ENCODE measurements at regions of chr3 and their contacts with region 1.

Region 1: GRCh38 chr3:124467980-124468902 is 262.0 kb upstream of the UMPS start:
- DNase-seq: peak; percentile 62
- H3K4me3 Mint-ChIP-seq: no peak overlapping the region
- H3K27ac Mint-ChIP-seq: no peak overlapping the region
- H3K4me1 Mint-ChIP-seq: no peaks in the 10 kb centered on the region
- H3K27me3 Mint-ChIP-seq: peaks cover 90% of the 10 kb centered on the region
- CTCF ChIP-seq: peak; percentile 99

Region 2: GRCh38 chr3:124014366-124014942 is 453.8 kb before region 1 on chr3:
- CTCF ChIA-PET with region 1: no interaction called
- POLR2A ChIA-PET with region 1: no interaction called
- intact Hi-C with region 1: loop called (anchors 1 kb)
- DNase-seq: no peak
- H3K4me3 Mint-ChIP-seq: no peak overlapping the region
- H3K27ac Mint-ChIP-seq: no peak overlapping the region
- H3K4me1 Mint-ChIP-seq: no peaks in the 10 kb centered on the region
- H3K27me3 Mint-ChIP-seq: peaks cover 89% of the 10 kb centered on the region
- CTCF ChIP-seq: no peak

Region 3: DNA sequence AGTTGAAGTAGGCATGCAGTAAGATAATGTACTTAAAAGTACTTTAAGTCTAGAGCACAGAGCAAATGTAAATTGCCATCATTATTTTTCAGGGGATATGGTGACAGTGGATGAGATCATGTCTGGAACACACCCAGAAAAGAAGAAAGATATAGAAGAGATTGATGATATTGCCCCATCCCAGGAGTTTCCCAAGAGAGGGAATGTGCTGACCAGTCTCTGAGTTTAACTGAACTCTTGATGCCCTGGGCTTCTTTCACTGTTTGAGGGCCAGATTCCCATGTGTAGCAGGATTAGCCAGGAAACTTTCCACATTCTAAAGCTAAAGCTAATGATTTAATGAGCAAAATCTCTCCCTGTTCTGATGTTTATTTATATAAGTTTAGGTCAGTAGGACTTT is 104.8 kb before region 1 on chr3:
- CTCF ChIA-PET with region 1: interaction called, 14 read pairs
- POLR2A ChIA-PET with region 1: no interaction called
- intact Hi-C with region 1: no loop called
- DNase-seq: peak; percentile 27
- H3K4me3 Mint-ChIP-seq: no peak overlapping the region
- H3K27ac Mint-ChIP-seq: no peak overlapping the region
- H3K4me1 Mint-ChIP-seq: no peaks in the 10 kb centered on the region
- H3K27me3 Mint-ChIP-seq: peaks cover 58% of the 10 kb centered on the region
- CTCF ChIP-seq: no peak

Region 4: GRCh38 chr3:124413989-124414598 is 54.1 kb before region 1 on chr3:
- CTCF ChIA-PET with region 1: no interaction called
- POLR2A ChIA-PET with region 1: no interaction called
- intact Hi-C with region 1: no loop called
- DNase-seq: peak; percentile 22
- H3K4me3 Mint-ChIP-seq: no peak overlapping the region
- H3K27ac Mint-ChIP-seq: no peak overlapping the region
- H3K4me1 Mint-ChIP-seq: peaks cover 17% of the 10 kb centered on the region
- H3K27me3 Mint-ChIP-seq: peaks cover 24% of the 10 kb centered on the region
- CTCF ChIP-seq: no peak

Region 5: DNA sequence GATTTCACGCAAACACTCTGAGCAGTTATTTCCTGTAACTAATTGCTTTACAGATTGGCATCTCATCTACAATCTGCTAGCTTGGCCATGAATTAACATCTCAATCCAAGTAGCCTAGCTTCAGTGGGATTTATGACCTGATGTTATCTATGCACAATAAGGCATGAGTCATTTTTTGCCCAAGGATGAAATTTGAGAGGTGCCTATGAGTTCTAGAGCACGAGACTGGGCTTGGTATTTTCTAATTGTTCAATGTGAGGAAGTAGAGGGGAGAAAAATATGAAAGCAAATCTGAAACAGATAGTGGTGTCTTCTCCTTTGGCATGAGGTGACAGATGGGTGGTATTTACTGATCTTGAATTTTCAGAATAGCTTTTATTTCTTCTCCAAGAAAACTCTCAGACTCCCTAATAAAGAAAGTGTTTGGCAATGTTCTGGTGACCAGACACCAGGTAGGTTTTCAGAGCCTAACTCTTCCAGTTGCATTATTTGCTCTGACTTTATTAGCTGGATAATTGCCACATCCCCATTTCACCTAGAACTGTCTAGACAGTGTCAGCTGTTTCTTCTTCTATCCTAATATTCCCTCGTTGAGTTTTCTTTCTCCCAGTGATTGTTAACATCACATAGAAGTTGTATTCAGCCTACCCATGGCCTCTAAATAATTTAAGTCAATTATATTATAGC is 39.0 kb before region 1 on chr3:
- CTCF ChIA-PET with region 1: interaction called, 21 read pairs
- POLR2A ChIA-PET with region 1: no interaction called
- intact Hi-C with region 1: no loop called
- DNase-seq: peak; percentile 81
- H3K4me3 Mint-ChIP-seq: peak overlapping the region; percentile 15
- H3K27ac Mint-ChIP-seq: peak overlapping the region; percentile 66
- H3K4me1 Mint-ChIP-seq: peaks cover 25% of the 10 kb centered on the region
- H3K27me3 Mint-ChIP-seq: no peaks in the 10 kb centered on the region
- CTCF ChIP-seq: no peak

Region 6: GRCh38 chr3:124451630-124452317 is 16.5 kb before region 1 on chr3:
- CTCF ChIA-PET with region 1: interaction called, 23 read pairs
- POLR2A ChIA-PET with region 1: no interaction called
- intact Hi-C with region 1: no loop called
- DNase-seq: no peak
- H3K4me3 Mint-ChIP-seq: no peak overlapping the region
- H3K27ac Mint-ChIP-seq: no peak overlapping the region
- H3K4me1 Mint-ChIP-seq: no peaks in the 10 kb centered on the region
- H3K27me3 Mint-ChIP-seq: peaks cover 93% of the 10 kb centered on the region
- CTCF ChIP-seq: no peak

Region 7: DNA sequence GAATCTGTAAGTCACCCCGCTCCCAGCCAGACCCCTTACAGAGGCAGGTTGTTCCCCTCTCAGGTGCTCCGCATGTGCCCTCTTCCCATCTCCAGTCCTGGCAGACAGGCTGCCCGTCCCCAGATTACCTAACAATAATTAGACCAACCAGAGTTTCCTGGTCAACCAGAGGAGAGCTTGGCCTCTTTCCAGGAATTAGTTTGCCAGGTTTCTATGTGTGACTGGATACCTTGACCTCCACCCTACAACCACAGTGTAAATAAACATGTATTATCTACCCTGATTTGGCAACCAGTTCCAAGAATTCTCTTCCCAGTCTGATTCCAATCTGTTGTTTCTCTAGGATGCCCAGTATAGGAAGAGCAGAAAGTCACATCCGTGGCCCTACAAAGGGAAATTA is 84.0 kb after region 1 on chr3:
- CTCF ChIA-PET with region 1: interaction called, 9 read pairs
- POLR2A ChIA-PET with region 1: no interaction called
- intact Hi-C with region 1: loop called (anchors 2 kb)
- DNase-seq: peak; percentile 89
- H3K4me3 Mint-ChIP-seq: no peak overlapping the region
- H3K27ac Mint-ChIP-seq: no peak overlapping the region
- H3K4me1 Mint-ChIP-seq: peaks cover 8% of the 10 kb centered on the region
- H3K27me3 Mint-ChIP-seq: peaks cover 80% of the 10 kb centered on the region
- CTCF ChIP-seq: no peak

Region 8: DNA sequence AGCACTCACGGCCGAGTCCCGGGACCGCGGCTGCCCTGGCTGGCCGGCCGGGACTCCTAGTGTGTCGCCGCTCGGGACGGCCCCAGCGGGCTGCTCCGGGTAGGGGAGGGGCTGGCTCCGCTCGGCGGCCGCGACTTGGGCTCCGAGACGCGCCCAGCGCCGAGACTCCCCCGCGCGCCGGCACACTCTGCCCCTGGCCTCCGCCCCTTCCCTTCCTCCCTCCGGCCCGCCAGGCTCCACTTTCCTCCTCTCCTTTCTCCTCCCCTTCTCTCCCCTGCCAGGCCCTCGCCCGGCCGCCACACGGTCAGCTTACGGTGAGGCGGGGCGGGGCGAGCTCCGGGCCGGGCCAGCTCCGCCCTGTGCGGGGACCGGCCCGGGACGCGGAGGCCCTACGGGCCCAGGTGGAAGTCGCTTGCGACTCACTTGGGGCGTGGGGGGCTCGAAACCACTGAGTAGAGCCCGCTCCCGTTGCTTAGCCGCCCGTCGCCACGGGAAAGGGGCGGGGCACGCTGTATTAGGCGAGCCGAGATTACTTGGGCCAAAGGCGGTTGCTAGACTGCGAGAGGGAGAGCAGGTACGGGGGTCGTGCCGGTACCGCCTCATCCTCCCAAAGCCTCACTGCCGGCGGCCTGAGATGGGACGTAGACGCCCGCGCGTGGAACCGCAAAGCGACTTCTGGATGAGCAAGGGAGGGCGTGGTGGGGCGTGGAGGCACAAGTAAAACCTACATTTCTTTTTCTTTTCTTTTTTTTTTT is 419.1 kb after region 1 on chr3 and contains the start of gene ITGB5:
- CTCF ChIA-PET with region 1: no interaction called
- POLR2A ChIA-PET with region 1: no interaction called
- intact Hi-C with region 1: no loop called
- DNase-seq: peak; percentile 90
- H3K4me3 Mint-ChIP-seq: peak within 1 kb of the TSS; percentile 75
- H3K27ac Mint-ChIP-seq: peak within 1 kb of the TSS; percentile 36
- H3K4me1 Mint-ChIP-seq: peaks cover 24% of the 10 kb centered on the region
- H3K27me3 Mint-ChIP-seq: no peaks in the 10 kb centered on the region
- CTCF ChIP-seq: no peak
- total RNA-seq, gene ITGB5: 100 and 101 TPM in 2 replicates